ENCODE measurements at regions of chr2 and their contacts with region 1.

Region 1: DNA sequence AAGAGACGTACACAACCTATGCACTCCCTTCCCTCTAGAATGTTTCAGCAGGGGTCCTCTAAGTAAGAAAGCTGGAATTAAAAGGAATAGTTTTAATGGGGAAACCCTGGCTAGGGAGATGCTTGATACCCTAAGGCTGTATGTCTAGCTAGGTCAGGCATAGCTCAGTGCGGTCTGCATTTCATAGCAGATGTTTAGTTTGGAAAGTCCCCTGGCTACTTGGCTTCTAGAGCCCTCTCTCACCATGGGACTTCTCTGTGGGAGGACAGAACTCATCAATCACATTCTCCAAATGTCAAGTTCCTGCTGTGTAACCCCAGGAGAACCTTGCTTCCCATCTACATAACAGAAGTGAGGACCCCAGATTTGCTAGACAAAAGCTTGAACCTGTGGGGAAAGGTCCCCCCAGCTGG is 24.1 kb upstream of the ANXA4 start:
- DNase-seq: no peak
- ATAC-seq: no peak
- H3K4me3 ChIP-seq: no peak overlapping the region
- H3K27ac ChIP-seq: no peak overlapping the region
- H3K4me1 ChIP-seq: peaks cover 0 to 9% (median 4%) of the 10 kb centered on the region in 9 donors
- H3K27me3 ChIP-seq: no peaks in the 10 kb centered on the region
- CTCF ChIP-seq: no peak

Region 2: DNA sequence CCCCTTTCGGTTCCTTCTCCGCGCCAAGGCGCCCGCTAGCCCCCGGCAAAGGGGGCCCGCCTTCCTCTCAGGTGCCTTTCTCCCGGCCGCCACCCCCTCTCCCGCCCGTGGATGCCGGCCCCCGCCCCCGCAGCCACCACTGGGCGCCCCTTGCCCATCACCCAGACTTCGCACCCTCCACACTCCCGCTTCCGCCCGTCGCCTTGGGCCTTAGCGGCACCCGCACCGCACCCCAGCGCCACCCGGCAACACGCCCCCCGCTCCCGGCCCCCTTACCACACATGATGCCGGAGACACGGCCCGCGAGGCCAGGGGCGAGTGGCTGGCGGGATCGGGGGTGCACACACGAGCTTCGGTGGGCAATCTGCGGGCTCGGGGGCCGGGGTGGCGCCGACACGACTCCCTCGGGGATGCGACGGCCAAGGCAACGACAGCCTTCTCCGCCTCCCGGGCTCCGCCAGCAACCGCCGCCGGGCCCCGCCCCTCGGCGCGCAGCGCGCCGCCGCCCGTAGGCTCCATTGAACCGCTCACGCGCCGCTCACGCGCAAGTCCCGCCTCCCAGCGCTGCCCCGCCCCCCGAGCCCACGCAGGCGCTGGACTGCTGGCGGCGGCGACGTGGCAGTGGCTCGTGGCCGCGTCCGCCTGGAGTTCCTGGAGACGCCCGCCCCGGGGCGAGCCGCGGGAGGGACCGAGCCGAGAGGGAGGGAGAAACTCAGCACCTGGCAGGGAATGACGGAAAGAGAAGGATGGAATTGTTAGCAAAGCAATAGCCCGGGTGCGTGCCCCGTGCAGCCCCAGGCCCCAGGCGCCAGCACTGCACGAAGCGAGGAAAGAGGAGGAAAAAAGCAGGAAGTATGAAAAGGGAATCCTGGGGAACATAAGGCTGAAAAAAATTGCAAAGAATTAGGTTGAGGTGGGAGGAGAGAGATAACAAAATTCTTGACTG is 330.8 kb before region 1 on chr2 and contains the start of gene GFPT1:
- intact Hi-C with region 1: loop called in 1 of 10 experiments (anchors 10 kb)
- DNase-seq: peak; percentile 93 to 97
- ATAC-seq: peak; percentile 98 to 99 (median 99)
- H3K4me3 ChIP-seq: peak within 1 kb of the TSS; percentile 84 to 96 (median 88)
- H3K27ac ChIP-seq: peak within 1 kb of the TSS; percentile 54 to 92 (median 86)
- H3K4me1 ChIP-seq: peaks cover 0 to 62% (median 31%) of the 10 kb centered on the region in 9 donors
- H3K27me3 ChIP-seq: no peaks in the 10 kb centered on the region
- CTCF ChIP-seq: peak in 2 of 9 donors; percentile 1 to 9
- total RNA-seq, gene GFPT1: 30.8 to 90.3 (median 65.7) TPM

Region 3: GRCh38 chr2:69559442-69560146 is 158.3 kb before region 1 on chr2:
- intact Hi-C with region 1: loop called (anchors 1 to 5 kb)
- DNase-seq: no peak
- ATAC-seq: peak; percentile 71 to 84 (median 76)
- H3K4me3 ChIP-seq: no peak overlapping the region
- H3K27ac ChIP-seq: peak overlapping the region in 2 of 10 donors; percentile 4 to 10
- H3K4me1 ChIP-seq: peaks cover 11 to 76% (median 44%) of the 10 kb centered on the region in 9 donors
- H3K27me3 ChIP-seq: no peaks in the 10 kb centered on the region
- CTCF ChIP-seq: peak in 8 of 9 donors; percentile 44 to 81 (median 72)

Region 4: GRCh38 chr2:69565431-69565839 is 152.4 kb before region 1 on chr2:
- intact Hi-C with region 1: loop called in 2 of 10 experiments (anchors 2 kb)
- DNase-seq: peak; percentile 48 to 58
- ATAC-seq: peak; percentile 33 to 66 (median 50)
- H3K4me3 ChIP-seq: no peak overlapping the region
- H3K27ac ChIP-seq: peak overlapping the region in 2 of 10 donors; percentile 30 to 50
- H3K4me1 ChIP-seq: peaks cover 9 to 88% (median 50%) of the 10 kb centered on the region in 9 donors
- H3K27me3 ChIP-seq: no peaks in the 10 kb centered on the region
- CTCF ChIP-seq: peak; percentile 24 to 88 (median 72)

Region 5: DNA sequence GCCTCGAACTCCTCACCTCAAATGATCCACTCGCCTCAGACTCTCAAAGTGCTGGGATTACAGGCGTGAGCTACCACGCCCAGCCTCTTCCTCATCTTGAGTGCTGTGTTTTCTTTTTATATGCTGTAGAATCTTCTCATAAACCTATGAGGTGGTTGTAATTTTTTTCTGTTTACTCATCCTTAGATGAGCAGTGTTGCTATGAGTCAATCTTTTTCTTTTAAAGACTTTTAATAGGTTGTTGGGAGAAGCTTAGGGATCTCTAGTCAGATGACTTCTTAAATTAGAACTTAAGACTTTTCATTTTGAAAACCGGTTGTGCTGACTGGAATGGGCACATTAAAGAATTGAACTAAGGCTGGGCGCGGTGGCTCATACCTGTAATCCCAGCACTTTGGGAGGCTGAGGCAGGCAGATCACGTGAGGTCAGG is 65.6 kb before region 1 on chr2:
- intact Hi-C with region 1: loop called in 4 of 10 experiments (anchors 5 to 10 kb)
- DNase-seq: no peak
- ATAC-seq: no peak
- H3K4me3 ChIP-seq: no peak overlapping the region
- H3K27ac ChIP-seq: no peak overlapping the region
- H3K4me1 ChIP-seq: peaks cover 0 to 21% (median 0%) of the 10 kb centered on the region in 9 donors
- H3K27me3 ChIP-seq: no peaks in the 10 kb centered on the region
- CTCF ChIP-seq: no peak

Measured in heart right ventricle (tissue), 16 donors.